Activated CD8-positive, alpha-beta T cell treated with anti-CD3 and anti-CD28 coated beads for 36 hours (primary cell): ENCODE measurements at regions of chr10 and their contacts with region 1.

Region 1: DNA sequence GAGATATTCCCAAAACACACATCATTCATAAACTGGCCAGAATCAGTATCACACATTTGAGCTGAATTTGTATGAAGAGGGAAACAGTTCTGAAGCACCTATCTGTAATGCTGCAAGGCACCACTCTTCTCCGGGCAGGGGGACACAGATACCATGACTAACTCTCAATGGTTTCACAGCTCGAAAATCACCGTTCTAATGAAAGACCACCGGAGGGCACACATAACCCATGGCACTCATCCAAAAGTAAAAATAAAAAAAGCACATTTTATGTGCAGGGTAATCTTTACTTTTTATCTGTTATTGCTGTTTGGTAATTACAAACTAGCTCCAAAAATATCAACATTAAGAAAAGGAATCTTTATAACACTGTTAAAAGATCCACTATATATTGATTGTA is 137.5 kb downstream of the PARD3 start:
- DNase-seq: no peak
- ATAC-seq: no peak
- H3K4me3 Mint-ChIP-seq: no peak overlapping the region
- H3K27ac Mint-ChIP-seq: no peak overlapping the region
- H3K4me1 Mint-ChIP-seq: no peaks in the 10 kb centered on the region
- H3K27me3 Mint-ChIP-seq: no peaks in the 10 kb centered on the region
- CTCF ChIP-seq: no peak

Region 2: GRCh38 chr10:34644224-34644623 is 33.4 kb before region 1 on chr10:
- CTCF ChIA-PET with region 1: no interaction called
- POLR2A ChIA-PET with region 1: no interaction called
- intact Hi-C with region 1: no loop called
- DNase-seq: no peak
- ATAC-seq: no peak
- H3K4me3 Mint-ChIP-seq: no peak overlapping the region
- H3K27ac Mint-ChIP-seq: no peak overlapping the region
- H3K4me1 Mint-ChIP-seq: no peaks in the 10 kb centered on the region
- H3K27me3 Mint-ChIP-seq: no peaks in the 10 kb centered on the region
- CTCF ChIP-seq: no peak

Region 3: GRCh38 chr10:34815185-34816084 is 137.8 kb after region 1 on chr10 and contains the start of gene PARD3:
- CTCF ChIA-PET with region 1: no interaction called
- POLR2A ChIA-PET with region 1: no interaction called
- intact Hi-C with region 1: loop called (anchors 10 kb)
- DNase-seq: peak; percentile 23
- ATAC-seq: peak; percentile 75
- H3K4me3 Mint-ChIP-seq: peak within 1 kb of the TSS; percentile 63
- H3K27ac Mint-ChIP-seq: no peak within 1 kb of the TSS
- H3K4me1 Mint-ChIP-seq: peaks cover 6% of the 10 kb centered on the region
- H3K27me3 Mint-ChIP-seq: peaks cover 45% of the 10 kb centered on the region
- CTCF ChIP-seq: no peak
- total RNA-seq, gene PARD3: 1.6 to 2.0 TPM